H1 (cell line): ENCODE measurements at regions of chr6 and their contacts with region 1.

Region 1: GRCh38 chr6:41602864-41603608 is 35.2 kb upstream of the MDFI start:
- DNase-seq: peak; percentile 61 to 84
- H3K4me3 ChIP-seq: peak overlapping the region in 3 of 4 experiments; percentile 32 to 54 (median 33); a peak in 5 of 8 replicates
- H3K27ac ChIP-seq: no peak overlapping the region
- H3K4me1 ChIP-seq: peaks cover 0 to 30% (median 11%) of the 10 kb centered on the region in 4 experiments; a peak in 6 of 7 replicates
- H3K27me3 ChIP-seq: no peaks in the 10 kb centered on the region
- CTCF ChIP-seq: peak in 2 of 3 experiments; percentile 94 to 95; a peak in 3 of 4 replicates
- EP300 ChIP-seq: no peak; a peak in 1 of 3 replicates
- POLR2A ChIP-seq: 0 out of 3 replicates have a peak, but pooled peaks of 1 of the 2 experiments have one; percentile 25
- RAD21 ChIP-seq: peak; percentile 95 to 96

Region 2: GRCh38 chr6:41449399-41450245 is 153.4 kb before region 1 on chr6:
- CTCF ChIA-PET with region 1: interaction called, 14 read pairs
- POLR2A ChIA-PET with region 1: no interaction called
- DNase-seq: no peak
- H3K4me3 ChIP-seq: no peak overlapping the region
- H3K27ac ChIP-seq: no peak overlapping the region
- H3K4me1 ChIP-seq: peaks cover 0 to 3% (median 0%) of the 10 kb centered on the region in 4 experiments; a peak in 4 of 7 replicates
- H3K27me3 ChIP-seq: peaks cover 1 to 10% (median 6%) of the 10 kb centered on the region in 4 experiments
- CTCF ChIP-seq: no peak
- EP300 ChIP-seq: no peak
- POLR2A ChIP-seq: no peak
- RAD21 ChIP-seq: no peak

Region 3: GRCh38 chr6:41560431-41561192 is 42.4 kb before region 1 on chr6:
- CTCF ChIA-PET with region 1: interaction called, 14 read pairs
- POLR2A ChIA-PET with region 1: interaction called, 4 read pairs
- DNase-seq: peak in 1 of 2 experiments; percentile 80
- H3K4me3 ChIP-seq: peak overlapping the region; percentile 56 to 76 (median 72)
- H3K27ac ChIP-seq: no peak overlapping the region
- H3K4me1 ChIP-seq: peaks cover 24 to 39% (median 29%) of the 10 kb centered on the region in 4 experiments
- H3K27me3 ChIP-seq: peaks cover 0 to 16% (median 12%) of the 10 kb centered on the region in 4 experiments; a peak in 5 of 7 replicates
- CTCF ChIP-seq: no peak
- EP300 ChIP-seq: no peak
- POLR2A ChIP-seq: no peak
- RAD21 ChIP-seq: no peak

Region 4: DNA sequence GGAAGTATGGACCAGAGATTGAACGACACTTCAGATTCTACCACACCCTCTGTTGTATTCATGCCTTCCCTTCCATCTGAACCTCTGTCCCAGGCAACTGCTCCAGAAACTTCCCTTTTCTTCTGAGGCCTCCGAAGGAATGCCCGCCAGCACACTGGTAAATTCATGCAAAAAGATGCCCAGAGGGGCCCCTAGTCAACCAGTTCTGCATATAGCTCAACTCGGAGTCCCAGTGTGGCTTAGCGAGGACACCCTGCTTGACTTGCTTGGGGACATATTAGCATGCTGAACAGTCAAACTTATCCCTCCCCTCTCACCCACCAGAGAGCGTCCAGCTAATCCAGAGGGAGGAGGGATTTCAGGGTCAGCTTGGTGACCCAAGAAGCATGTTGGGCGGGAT is 12.2 kb after region 1 on chr6:
- CTCF ChIA-PET with region 1: interaction called, 30 read pairs
- POLR2A ChIA-PET with region 1: no interaction called
- DNase-seq: no peak
- H3K4me3 ChIP-seq: no peak overlapping the region
- H3K27ac ChIP-seq: no peak overlapping the region
- H3K4me1 ChIP-seq: no peaks in the 10 kb centered on the region
- H3K27me3 ChIP-seq: no peaks in the 10 kb centered on the region
- CTCF ChIP-seq: no peak
- EP300 ChIP-seq: no peak
- POLR2A ChIP-seq: no peak
- RAD21 ChIP-seq: no peak

Region 5: DNA sequence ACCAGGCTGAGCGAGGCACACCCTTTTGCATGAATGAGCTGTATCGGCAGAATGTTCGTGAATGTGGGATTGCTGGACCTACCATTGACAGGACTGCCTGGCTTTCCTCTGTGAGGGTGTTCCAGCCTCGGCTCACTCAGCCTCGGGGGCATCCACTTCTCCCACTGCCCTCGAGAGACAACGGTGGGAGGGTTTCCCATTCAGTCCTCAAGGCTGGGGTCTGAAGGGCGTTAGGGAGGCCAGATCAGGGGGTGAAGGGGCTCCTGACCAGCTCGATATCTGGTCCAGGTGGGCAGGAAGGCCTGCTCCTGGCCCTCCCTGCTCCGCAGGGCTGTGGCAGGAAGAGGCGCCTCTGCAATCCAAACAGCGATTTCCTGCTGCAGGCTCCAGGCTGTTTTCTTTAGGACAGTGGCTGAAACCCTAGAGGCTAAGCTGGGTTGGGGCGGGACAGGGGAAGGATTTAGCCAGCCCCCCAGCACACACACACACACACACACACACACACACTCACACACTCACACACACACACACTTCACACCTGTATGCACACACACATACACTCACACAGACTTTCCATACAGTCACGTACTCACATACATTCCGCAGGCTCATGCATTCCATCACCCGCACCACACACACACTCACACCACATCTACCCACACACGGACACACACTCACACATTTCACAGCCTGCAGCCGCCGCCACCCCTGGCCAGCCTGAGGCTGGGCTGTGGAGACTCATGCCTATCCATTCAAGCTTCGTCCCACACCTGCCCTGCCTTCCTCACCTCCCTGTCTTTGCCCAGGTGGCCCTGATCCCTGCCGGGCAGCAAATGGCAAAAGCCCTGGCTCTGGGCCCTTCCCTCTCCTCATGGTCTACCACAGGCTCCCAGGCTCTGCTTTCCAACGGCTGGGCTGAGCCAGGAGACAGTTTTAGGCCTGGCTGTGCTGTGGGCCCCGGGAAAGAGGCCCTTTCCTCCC is 53.0 kb after region 1 on chr6:
- CTCF ChIA-PET with region 1: interaction called, 37 read pairs
- POLR2A ChIA-PET with region 1: interaction called, 3 read pairs
- DNase-seq: peak in 1 of 2 experiments; percentile 49
- H3K4me3 ChIP-seq: no peak overlapping the region
- H3K27ac ChIP-seq: no peak overlapping the region
- H3K4me1 ChIP-seq: peaks cover 0 to 11% (median 4%) of the 10 kb centered on the region in 4 experiments; a peak in 4 of 7 replicates
- H3K27me3 ChIP-seq: no peaks in the 10 kb centered on the region; a peak in 1 of 7 replicates
- CTCF ChIP-seq: no peak
- EP300 ChIP-seq: no peak
- POLR2A ChIP-seq: no peak
- RAD21 ChIP-seq: no peak

Region 6: DNA sequence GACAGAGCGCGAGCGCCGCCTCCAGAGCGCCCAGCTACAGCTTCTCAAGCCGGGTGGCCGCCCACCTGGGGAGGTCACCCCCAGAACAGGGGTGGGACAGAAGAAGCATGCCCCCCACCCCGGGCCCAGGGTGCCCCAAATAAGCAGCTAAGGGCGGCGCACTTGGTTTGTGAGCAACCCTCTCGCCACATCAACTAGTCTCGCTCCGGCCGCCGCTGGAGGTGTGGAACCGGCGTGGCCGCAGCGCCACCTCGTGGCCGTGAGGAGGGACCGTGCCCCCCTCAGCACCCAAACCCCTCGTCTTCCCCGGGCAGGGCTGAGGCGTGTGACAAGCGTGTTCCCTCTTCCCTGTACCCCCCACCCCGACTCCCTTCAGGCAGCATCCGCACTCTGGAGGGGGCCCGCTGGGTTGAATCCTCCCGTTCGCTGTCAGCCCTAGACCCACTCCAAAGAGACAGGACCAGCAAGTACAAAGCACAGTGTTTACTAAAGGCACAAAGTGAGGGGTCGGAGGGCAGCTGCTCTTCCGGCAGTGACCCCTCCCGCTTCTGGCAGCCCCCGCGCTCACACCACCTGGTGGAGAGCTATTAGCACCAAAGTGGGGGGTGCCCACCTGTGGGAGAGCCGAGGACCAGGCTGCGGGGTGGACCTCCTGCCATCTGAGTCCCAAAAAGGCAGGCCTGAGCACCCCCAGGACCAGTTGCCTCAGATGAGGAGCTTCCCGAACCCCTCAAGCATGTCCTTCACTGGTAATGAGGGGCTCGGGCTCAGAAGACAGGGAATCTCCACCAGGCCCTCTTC is 80.7 kb after region 1 on chr6:
- CTCF ChIA-PET with region 1: interaction called, 299 read pairs
- POLR2A ChIA-PET with region 1: interaction called, 10 read pairs
- DNase-seq: peak in 1 of 2 experiments; percentile 91
- H3K4me3 ChIP-seq: peak overlapping the region in 3 of 4 experiments; percentile 11 to 57 (median 29); a peak in 5 of 8 replicates
- H3K27ac ChIP-seq: no peak overlapping the region
- H3K4me1 ChIP-seq: peaks cover 5 to 41% (median 18%) of the 10 kb centered on the region in 4 experiments
- H3K27me3 ChIP-seq: peaks cover 0 to 12% (median 5%) of the 10 kb centered on the region in 4 experiments; a peak in 4 of 7 replicates
- CTCF ChIP-seq: peak in 2 of 3 experiments; percentile 95; a peak in 3 of 4 replicates
- EP300 ChIP-seq: no peak
- POLR2A ChIP-seq: no peak
- RAD21 ChIP-seq: peak; percentile 92